Vagina (tissue), 2 donors: ENCODE measurements at regions of chr14 and their contacts with region 1.

Region 1: DNA sequence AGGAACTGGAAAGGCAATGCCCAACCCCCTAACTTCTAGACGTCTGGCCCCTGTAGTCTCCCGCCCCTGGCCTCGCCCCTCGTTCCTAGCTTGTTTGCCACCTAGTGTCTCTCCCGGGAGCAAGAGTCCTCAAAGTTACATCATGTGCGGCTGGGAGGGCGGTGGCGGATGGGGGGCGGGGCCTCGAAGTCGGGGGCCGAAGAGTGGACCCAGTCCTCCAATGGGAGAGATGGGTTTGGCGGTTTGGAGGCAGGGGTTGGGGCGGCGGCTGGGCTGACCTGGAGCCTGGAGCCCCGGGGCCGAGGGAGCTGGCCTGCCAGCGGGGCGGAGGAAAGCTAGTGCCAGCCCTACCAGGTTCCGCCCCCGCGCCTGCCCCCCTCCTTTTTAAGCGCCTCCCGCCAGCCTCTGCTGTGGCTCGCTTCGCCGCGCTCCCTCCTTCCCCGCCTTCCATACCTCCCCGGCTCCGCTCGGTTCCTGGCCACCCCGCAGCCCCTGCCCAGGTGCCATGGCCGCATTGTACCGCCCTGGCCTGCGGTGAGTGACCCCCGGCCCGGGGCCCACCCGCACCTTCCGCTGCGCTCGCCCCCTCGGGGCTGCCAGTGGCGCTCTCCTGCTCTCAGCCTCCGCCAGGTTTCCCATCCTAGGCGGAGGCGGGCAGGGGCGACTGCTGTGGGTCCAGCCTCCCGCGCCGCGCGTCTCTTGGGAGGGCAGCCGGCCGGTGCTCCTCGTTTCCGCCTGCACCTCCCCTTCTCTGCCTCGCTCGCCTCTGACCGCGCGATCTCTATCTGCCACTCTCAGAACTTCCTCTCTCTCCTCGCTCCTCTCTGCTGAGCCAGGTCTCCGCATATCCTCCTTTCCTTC is at the start of gene PCK2:
- DNase-seq: peak in 1 of 2 donors; percentile 96
- H3K4me3 ChIP-seq: peak within 1 kb of the TSS; percentile 95 to 96
- H3K27ac ChIP-seq: peak within 1 kb of the TSS; percentile 93
- H3K4me1 ChIP-seq: peaks cover 23% of the 10 kb centered on the region
- H3K27me3 ChIP-seq: no peaks in the 10 kb centered on the region
- CTCF ChIP-seq: peak in 1 of 3 experiments; percentile 5
- POLR2A ChIP-seq: peak in 1 of 2 donors; percentile 51
- total RNA-seq, gene PCK2: 18.7 TPM

Region 2: DNA sequence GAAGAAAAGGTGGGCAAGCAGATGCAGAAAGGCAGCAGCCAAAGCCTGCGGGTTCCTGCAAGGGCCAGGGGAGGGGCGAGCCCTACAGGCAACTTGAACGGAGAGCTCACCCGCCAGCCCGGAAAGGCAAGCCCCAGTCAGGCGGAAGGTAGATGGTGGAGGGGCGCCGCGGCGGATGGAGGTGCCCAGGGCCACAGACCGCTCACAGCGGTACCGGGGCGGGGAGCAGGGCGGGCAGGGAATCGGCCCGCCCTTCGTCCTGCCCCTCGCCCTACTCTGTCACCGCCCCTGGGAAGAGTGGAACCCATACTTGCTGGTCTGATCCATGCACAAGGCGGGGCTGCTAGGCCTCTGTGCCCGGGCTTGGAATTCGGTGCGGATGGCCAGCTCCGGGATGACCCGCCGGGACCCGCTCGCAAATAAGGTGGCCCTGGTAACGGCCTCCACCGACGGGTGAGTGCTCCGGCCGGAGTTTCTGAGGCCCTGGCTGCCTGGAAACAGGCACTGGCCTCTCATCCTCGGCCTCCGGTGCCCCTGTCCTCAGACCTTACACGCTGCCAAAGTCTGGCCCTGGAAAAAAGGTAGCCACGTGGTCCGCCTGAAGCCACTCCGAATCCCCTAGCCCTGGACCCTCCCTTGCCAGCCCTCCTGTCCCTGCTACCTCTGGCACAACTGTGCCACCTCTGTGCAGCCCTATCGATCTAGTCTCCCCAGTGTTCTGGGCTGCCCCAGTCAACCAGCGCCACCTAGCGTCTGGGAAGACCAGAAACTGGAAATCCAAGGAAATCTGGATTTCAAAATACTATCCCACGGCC is 140.5 kb before region 1 on chr14 and contains the start of gene DHRS4:
- intact Hi-C with region 1: no loop called
- DNase-seq: no peak
- H3K4me3 ChIP-seq: peak within 1 kb of the TSS; percentile 65 to 85
- H3K27ac ChIP-seq: peak within 1 kb of the TSS; percentile 89
- H3K4me1 ChIP-seq: peaks cover 29% of the 10 kb centered on the region
- H3K27me3 ChIP-seq: no peaks in the 10 kb centered on the region
- CTCF ChIP-seq: peak; percentile 67 to 96 (median 89)
- POLR2A ChIP-seq: no peak
- total RNA-seq, gene DHRS4: 21.4 TPM

Region 3: GRCh38 chr14:23984891-23985602 is 109.1 kb before region 1 on chr14:
- intact Hi-C with region 1: no loop called
- DNase-seq: no peak
- H3K4me3 ChIP-seq: no peak overlapping the region
- H3K27ac ChIP-seq: peak overlapping the region; percentile 89
- H3K4me1 ChIP-seq: peaks cover 41% of the 10 kb centered on the region
- H3K27me3 ChIP-seq: no peaks in the 10 kb centered on the region
- CTCF ChIP-seq: no peak
- POLR2A ChIP-seq: no peak

Region 4: DNA sequence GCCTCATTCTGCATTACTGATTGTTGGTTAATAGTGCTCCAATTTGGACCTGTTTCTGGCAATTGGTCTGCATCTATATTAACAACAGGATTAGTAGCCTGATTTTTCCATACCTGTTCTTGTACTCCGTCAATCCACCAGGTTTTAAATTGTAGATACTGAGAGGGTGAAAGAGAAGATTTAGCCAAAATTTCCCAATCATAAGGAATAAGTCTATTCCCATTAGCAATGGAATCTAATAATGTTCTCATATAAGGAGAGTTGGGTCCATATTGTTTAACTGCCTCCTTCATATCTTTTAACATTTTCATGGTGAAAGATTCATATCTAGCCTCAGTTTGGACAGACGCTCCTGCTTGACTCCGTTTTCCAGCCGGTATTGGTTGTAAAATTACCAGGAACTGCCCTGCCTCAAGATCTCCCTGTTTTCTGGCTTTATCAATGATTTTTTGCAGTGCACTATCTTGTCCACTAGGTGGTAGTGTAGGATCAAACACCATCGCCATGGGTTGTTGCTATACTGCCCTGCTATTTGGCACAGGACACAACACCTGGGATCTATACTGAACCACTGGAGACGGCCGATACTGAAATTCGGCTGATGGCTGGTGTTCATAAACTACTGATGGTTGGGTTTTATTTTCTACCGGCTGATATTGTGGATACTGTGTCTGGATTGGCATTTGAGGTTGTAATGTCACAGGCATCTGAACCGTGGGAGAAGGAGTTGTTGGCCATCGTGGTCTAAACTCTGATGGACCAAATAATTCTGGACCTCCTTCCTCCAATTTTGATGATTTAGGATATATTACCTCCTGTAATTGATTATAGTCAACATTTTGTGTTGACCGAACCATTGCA is 80.2 kb before region 1 on chr14:
- intact Hi-C with region 1: loop called (anchors 5 kb)
- DNase-seq: no peak
- H3K4me3 ChIP-seq: no peak overlapping the region
- H3K27ac ChIP-seq: no peak overlapping the region
- H3K4me1 ChIP-seq: peaks cover 13% of the 10 kb centered on the region
- H3K27me3 ChIP-seq: no peaks in the 10 kb centered on the region
- CTCF ChIP-seq: peak; percentile 60 to 92 (median 90)
- POLR2A ChIP-seq: no peak